Esophagus squamous epithelium (tissue), 5 donors: ENCODE measurements at regions of chr3 and their contacts with region 1.

Region 1: DNA sequence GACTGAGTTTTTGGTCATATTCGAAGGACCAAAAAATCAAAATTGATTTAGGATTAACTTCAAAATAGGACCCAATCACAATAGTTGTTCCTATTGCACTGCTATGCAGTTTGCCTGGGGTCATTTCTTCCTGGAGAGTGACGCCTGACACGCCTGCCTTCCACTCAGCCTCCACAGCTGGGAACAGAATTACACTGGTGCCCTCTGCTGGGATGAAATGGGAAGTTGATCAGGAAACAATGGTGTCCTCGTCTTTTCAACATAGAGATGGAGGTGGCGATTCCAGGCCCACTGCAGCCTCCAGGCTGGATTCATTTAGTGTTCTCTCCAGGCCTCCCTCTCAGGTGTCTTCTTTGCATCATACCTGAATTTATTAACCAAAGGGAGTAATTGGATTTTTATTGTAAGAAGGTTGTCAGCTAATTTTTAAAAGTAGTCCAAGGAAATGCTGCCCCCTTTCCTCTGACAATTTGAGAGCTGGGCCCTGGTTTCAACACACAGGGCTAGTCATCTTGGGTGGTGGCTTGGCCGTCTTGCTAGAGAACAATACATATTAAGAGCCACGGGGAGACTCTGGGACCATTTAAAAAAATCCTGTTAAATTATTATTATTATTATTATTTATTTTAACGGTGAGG is 69.7 kb downstream of the GAP43 start:
- DNase-seq: no peak
- H3K4me3 ChIP-seq: no peak overlapping the region
- H3K27ac ChIP-seq: no peak overlapping the region
- H3K4me1 ChIP-seq: peaks cover 0 to 7% (median 0%) of the 10 kb centered on the region in 3 donors
- H3K27me3 ChIP-seq: no peaks in the 10 kb centered on the region
- CTCF ChIP-seq: peak; percentile 64 to 84 (median 74)
- POLR2A ChIP-seq: no peak

Region 2: GRCh38 chr3:115217678-115218451 is 475.1 kb before region 1 on chr3:
- intact Hi-C with region 1: loop called (anchors 10 kb)
- DNase-seq: no peak
- H3K4me3 ChIP-seq: no peak overlapping the region
- H3K27ac ChIP-seq: no peak overlapping the region
- H3K4me1 ChIP-seq: peaks cover 0 to 11% (median 4%) of the 10 kb centered on the region in 3 donors
- H3K27me3 ChIP-seq: no peaks in the 10 kb centered on the region
- CTCF ChIP-seq: peak; percentile 11 to 68 (median 50)
- POLR2A ChIP-seq: no peak